Activated CD4-positive, alpha-beta memory T cell treated with anti-CD3 and anti-CD28 coated beads, Interleukin-2, amount 10 ng/mL, durations not matched to agents 7 days and 5 days (primary cell): ENCODE measurements at regions of chr2 and their contacts with region 1.

Region 1: GRCh38 chr2:223993621-223994232 is 36.5 kb downstream of the MRPL44 start:
- DNase-seq: peak; percentile 63
- H3K4me3 Mint-ChIP-seq: no peak overlapping the region
- H3K27ac Mint-ChIP-seq: no peak overlapping the region
- H3K4me1 Mint-ChIP-seq: peaks cover 10% of the 10 kb centered on the region
- H3K27me3 Mint-ChIP-seq: no peaks in the 10 kb centered on the region

Region 2: GRCh38 chr2:223934870-223935269 is 58.9 kb before region 1 on chr2:
- CTCF ChIA-PET with region 1: no interaction called
- POLR2A ChIA-PET with region 1: no interaction called
- DNase-seq: no peak
- H3K4me3 Mint-ChIP-seq: no peak overlapping the region
- H3K27ac Mint-ChIP-seq: no peak overlapping the region
- H3K4me1 Mint-ChIP-seq: peaks cover 81% of the 10 kb centered on the region
- H3K27me3 Mint-ChIP-seq: no peaks in the 10 kb centered on the region

Region 3: GRCh38 chr2:223952280-223952968 is 41.3 kb before region 1 on chr2:
- CTCF ChIA-PET with region 1: no interaction called
- POLR2A ChIA-PET with region 1: no interaction called
- DNase-seq: no peak
- H3K4me3 Mint-ChIP-seq: no peak overlapping the region
- H3K27ac Mint-ChIP-seq: no peak overlapping the region
- H3K4me1 Mint-ChIP-seq: peaks cover 56% of the 10 kb centered on the region
- H3K27me3 Mint-ChIP-seq: no peaks in the 10 kb centered on the region

Region 4: DNA sequence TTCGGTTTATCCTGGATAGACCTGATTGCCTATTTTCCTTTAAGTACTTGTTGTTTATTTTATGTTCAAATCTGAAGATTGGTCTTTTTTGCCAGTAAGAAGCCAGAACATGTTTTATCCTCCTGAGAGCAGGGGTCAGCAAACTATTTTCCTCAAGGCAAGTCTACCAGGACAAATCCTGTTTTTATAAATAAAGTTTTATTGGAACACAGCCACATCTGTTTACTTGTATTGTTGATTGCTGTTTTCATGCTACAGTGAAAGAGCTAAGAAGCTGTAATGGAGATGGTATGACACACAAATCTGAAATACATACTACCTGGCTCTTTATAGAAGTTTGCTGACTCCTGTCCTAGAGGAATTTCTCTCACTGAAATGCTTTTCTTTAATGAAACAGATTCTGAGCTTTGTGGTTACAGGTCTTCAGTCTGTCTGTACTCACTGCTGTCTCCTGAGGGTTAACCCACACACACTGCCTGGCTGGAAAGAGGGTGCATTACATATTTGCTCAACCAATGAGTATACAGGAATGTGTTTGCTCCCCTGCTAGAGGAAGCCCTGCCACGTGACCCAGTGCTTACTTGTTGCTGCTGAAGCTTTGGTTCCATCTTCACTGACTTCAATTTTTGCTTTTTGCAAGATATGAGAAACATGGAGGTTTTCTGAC is 13.9 kb before region 1 on chr2:
- CTCF ChIA-PET with region 1: interaction called, 14 read pairs
- POLR2A ChIA-PET with region 1: no interaction called
- DNase-seq: no peak
- H3K4me3 Mint-ChIP-seq: no peak overlapping the region
- H3K27ac Mint-ChIP-seq: no peak overlapping the region
- H3K4me1 Mint-ChIP-seq: peaks cover 2% of the 10 kb centered on the region
- H3K27me3 Mint-ChIP-seq: no peaks in the 10 kb centered on the region

Region 5: GRCh38 chr2:224025874-224026273 is 32.1 kb after region 1 on chr2:
- CTCF ChIA-PET with region 1: interaction called, 11 read pairs
- POLR2A ChIA-PET with region 1: no interaction called
- DNase-seq: peak; percentile 74
- H3K4me3 Mint-ChIP-seq: peak overlapping the region; percentile 4
- H3K27ac Mint-ChIP-seq: peak overlapping the region; percentile 80
- H3K4me1 Mint-ChIP-seq: peaks cover 37% of the 10 kb centered on the region
- H3K27me3 Mint-ChIP-seq: no peaks in the 10 kb centered on the region

Region 6: GRCh38 chr2:224155896-224156295 is 162.2 kb after region 1 on chr2:
- CTCF ChIA-PET with region 1: no interaction called
- POLR2A ChIA-PET with region 1: no interaction called
- DNase-seq: no peak
- H3K4me3 Mint-ChIP-seq: no peak overlapping the region
- H3K27ac Mint-ChIP-seq: no peak overlapping the region
- H3K4me1 Mint-ChIP-seq: no peaks in the 10 kb centered on the region
- H3K27me3 Mint-ChIP-seq: peaks cover 6% of the 10 kb centered on the region

Region 7: GRCh38 chr2:224276251-224276650 is 282.5 kb after region 1 on chr2:
- CTCF ChIA-PET with region 1: interaction called, 157 read pairs
- POLR2A ChIA-PET with region 1: no interaction called
- DNase-seq: no peak
- H3K4me3 Mint-ChIP-seq: no peak overlapping the region
- H3K27ac Mint-ChIP-seq: no peak overlapping the region
- H3K4me1 Mint-ChIP-seq: no peaks in the 10 kb centered on the region
- H3K27me3 Mint-ChIP-seq: peaks cover 19% of the 10 kb centered on the region

Region 8: GRCh38 chr2:224284134-224284946 is 290.6 kb after region 1 on chr2:
- CTCF ChIA-PET with region 1: interaction called, 157 read pairs
- POLR2A ChIA-PET with region 1: interaction called, 3 read pairs
- DNase-seq: no peak
- H3K4me3 Mint-ChIP-seq: no peak overlapping the region
- H3K27ac Mint-ChIP-seq: no peak overlapping the region
- H3K4me1 Mint-ChIP-seq: no peaks in the 10 kb centered on the region
- H3K27me3 Mint-ChIP-seq: peaks cover 31% of the 10 kb centered on the region

Region 9: GRCh38 chr2:224369028-224369632 is 375.4 kb after region 1 on chr2:
- CTCF ChIA-PET with region 1: interaction called, 11 read pairs
- POLR2A ChIA-PET with region 1: no interaction called
- DNase-seq: no peak
- H3K4me3 Mint-ChIP-seq: no peak overlapping the region
- H3K27ac Mint-ChIP-seq: no peak overlapping the region
- H3K4me1 Mint-ChIP-seq: no peaks in the 10 kb centered on the region
- H3K27me3 Mint-ChIP-seq: peaks cover 6% of the 10 kb centered on the region